ENCODE measurements at regions of chr16 and their contacts with region 1.

Region 1: DNA sequence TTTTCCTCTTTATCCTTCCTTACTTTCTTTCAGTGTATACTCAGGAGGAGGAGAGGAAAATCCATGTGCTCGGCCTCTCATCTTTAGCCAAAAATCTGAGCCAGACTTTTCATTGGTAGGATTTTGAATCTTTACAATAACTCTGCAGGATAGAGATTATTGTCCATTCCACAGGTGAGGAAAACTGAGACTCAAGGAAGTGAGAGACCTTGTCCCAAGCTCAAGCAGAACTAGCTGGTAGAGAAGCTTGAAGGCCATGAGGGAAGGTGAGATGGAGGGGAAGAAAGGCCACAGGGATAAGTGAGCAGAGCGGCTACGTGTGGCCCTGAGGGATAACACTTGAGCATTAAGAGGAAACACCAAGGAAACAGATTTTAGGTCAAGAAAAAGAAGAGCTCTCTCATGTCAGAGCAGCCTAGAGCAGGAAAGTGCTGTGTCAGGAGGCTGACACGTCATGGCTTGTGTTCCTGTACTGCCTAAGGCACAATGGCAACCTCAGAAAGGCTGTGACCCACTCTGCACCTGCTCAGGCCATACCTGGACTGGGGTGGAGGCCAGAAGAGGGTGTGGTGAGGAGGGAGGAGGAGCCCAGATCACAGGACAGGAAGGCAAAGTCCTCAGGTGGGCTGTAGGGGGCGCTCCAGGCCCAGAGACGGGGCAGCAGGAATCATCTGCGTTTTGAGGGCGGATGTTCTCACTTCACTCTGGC is 11.9 kb downstream of the MT4 start:
- DNase-seq: peak; percentile 95
- ATAC-seq: peak; percentile 100
- H3K4me3 Mint-ChIP-seq: no peak overlapping the region
- H3K27ac Mint-ChIP-seq: peak overlapping the region; percentile 70
- H3K4me1 Mint-ChIP-seq: peaks cover 4% of the 10 kb centered on the region
- H3K27me3 Mint-ChIP-seq: no peaks in the 10 kb centered on the region

Region 2: GRCh38 chr16:55989565-55989900 is 587.2 kb before region 1 on chr16:
- CTCF ChIA-PET with region 1: no interaction called
- POLR2A ChIA-PET with region 1: no interaction called
- intact Hi-C with region 1: no loop called
- DNase-seq: no peak
- ATAC-seq: no peak
- H3K4me3 Mint-ChIP-seq: no peak overlapping the region
- H3K27ac Mint-ChIP-seq: no peak overlapping the region
- H3K4me1 Mint-ChIP-seq: no peaks in the 10 kb centered on the region
- H3K27me3 Mint-ChIP-seq: peaks cover 16% of the 10 kb centered on the region

Region 3: DNA sequence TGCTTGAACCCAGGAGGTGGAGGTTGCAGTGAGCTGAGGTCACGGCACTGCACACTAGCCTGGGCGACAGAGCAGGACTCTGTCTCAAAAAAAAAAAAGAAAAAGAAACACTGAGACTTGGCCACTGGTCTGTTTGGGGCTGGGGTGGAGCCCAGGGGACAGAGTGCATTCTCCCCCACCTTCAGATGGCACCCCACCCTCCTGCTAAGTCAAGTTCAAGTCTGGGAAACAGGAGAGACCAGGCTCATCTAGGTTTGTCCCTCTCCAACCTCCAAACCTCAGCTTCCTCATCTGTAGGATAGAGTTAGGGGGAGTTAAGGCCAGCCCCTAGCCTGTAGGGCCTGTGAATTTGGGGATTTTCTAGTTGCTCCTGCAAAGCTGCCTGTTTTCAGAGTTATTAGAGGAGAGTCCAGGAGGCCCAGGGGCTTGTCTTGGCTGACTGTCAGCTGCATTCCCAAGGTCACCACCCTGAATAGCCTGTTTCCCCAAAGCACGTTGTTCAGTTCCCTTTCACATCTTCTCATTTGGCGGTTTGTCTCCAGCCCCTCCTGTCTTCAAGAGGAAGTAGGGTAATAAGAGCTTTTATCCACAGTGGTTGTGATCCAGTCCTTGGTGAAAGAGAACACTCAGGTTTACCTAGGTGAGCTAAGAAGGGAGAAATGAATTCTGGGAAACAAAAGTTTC is 14.8 kb after region 1 on chr16:
- CTCF ChIA-PET with region 1: interaction called, 13 read pairs
- POLR2A ChIA-PET with region 1: no interaction called
- intact Hi-C with region 1: no loop called
- DNase-seq: no peak
- ATAC-seq: no peak
- H3K4me3 Mint-ChIP-seq: no peak overlapping the region
- H3K27ac Mint-ChIP-seq: no peak overlapping the region
- H3K4me1 Mint-ChIP-seq: peaks cover 10% of the 10 kb centered on the region
- H3K27me3 Mint-ChIP-seq: peaks cover 20% of the 10 kb centered on the region

Region 4: DNA sequence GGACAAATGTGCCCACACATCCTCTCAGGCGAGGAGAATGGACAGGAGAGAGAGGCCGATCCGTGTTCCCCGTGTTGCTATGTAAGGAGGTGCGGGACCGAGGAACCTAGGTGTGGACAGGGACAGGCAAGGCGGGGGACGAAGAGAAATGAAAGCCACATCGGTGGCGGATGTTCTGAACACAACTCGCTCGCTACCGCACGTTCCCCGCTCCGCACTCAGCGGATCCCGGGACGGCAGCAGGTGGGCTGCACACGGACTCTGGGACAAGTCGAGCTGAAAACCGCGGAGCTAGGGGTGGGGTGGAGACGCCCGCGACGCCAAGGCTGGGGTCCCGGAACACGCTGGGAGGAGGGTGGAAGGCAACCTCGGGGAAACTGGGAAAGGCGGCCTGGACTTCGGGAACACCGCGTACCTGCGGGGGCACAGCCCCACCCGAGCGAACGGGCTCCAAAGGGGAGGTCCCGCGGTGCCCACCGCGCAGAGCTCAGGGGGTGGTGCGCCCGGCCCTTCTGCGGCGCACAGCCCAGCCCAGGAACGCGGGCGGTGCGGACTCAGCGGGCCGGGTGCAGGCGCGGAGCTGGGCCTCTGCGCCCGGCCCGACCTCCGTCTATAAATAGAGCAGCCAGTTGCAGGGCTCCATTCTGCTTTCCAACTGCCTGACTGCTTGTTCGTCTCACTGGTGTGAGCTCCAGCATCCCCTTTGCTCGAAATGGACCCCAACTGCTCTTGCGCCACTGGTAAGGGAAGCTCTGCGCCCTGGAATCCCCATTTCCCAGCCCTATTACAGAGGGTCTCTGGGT is 48.6 kb after region 1 on chr16 and contains the start of gene MT1E:
- CTCF ChIA-PET with region 1: interaction called, 3 read pairs
- POLR2A ChIA-PET with region 1: no interaction called
- intact Hi-C with region 1: loop called in 1 of 2 experiments (anchors 1 kb)
- DNase-seq: peak; percentile 82
- ATAC-seq: peak; percentile 88
- H3K4me3 Mint-ChIP-seq: peak within 1 kb of the TSS; percentile 71
- H3K27ac Mint-ChIP-seq: peak within 1 kb of the TSS; percentile 79
- H3K4me1 Mint-ChIP-seq: peaks cover 14% of the 10 kb centered on the region
- H3K27me3 Mint-ChIP-seq: peaks cover 26% of the 10 kb centered on the region
- total RNA-seq, gene MT1E: 61.1 to 108 TPM

Region 5: DNA sequence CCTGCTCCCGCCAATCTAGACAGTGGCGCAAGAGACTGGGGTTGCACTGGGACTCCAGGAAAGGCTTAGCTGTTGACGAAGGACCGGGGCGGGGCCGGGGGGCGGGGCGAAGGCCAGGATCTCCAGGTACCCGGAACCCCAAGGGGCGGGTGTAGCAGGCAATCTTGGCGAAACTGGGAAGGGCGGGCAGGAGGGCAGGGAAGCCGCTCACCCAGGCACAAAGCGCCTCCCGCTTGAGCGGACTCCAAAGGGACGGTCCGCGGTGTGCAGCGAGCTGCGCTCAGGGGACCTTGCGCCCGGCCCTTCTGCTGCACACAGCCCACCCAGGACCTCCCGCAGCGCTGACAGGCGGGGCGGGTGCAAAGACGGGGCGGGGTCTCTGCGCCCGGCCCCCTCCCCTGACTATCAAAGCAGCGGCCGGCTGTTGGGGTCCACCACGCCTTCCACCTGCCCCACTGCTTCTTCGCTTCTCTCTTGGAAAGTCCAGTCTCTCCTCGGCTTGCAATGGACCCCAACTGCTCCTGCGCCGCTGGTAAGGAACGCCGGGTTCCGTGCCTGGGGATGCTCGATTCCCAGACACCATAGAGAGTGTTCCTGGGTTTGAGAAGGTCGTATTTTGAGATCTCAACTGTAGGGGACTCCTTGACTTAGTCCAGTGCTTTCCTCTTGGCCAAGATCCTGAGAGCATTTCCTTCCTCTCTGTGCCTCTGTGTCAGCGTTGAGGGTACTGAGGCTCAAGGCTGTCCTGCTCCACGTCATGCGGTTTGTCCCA is 81.0 kb after region 1 on chr16 and contains the start of gene MT1F:
- CTCF ChIA-PET with region 1: interaction called, 3 read pairs
- POLR2A ChIA-PET with region 1: no interaction called
- intact Hi-C with region 1: loop called in 1 of 2 experiments (anchors 1 kb)
- DNase-seq: peak; percentile 84
- ATAC-seq: peak; percentile 85
- H3K4me3 Mint-ChIP-seq: peak within 1 kb of the TSS; percentile 79
- H3K27ac Mint-ChIP-seq: peak within 1 kb of the TSS; percentile 76
- H3K4me1 Mint-ChIP-seq: peaks cover 16% of the 10 kb centered on the region
- H3K27me3 Mint-ChIP-seq: peaks cover 2% of the 10 kb centered on the region
- total RNA-seq, gene MT1F: 7.0 to 7.1 TPM

Region 6: GRCh38 chr16:56700195-56700594 is 123.5 kb after region 1 on chr16:
- CTCF ChIA-PET with region 1: interaction called, 74 read pairs
- POLR2A ChIA-PET with region 1: interaction called, 4 read pairs
- intact Hi-C with region 1: loop called (anchors 1 kb)
- DNase-seq: no peak
- ATAC-seq: no peak
- H3K4me3 Mint-ChIP-seq: no peak overlapping the region
- H3K27ac Mint-ChIP-seq: no peak overlapping the region
- H3K4me1 Mint-ChIP-seq: peaks cover 8% of the 10 kb centered on the region
- H3K27me3 Mint-ChIP-seq: no peaks in the 10 kb centered on the region

Region 7: DNA sequence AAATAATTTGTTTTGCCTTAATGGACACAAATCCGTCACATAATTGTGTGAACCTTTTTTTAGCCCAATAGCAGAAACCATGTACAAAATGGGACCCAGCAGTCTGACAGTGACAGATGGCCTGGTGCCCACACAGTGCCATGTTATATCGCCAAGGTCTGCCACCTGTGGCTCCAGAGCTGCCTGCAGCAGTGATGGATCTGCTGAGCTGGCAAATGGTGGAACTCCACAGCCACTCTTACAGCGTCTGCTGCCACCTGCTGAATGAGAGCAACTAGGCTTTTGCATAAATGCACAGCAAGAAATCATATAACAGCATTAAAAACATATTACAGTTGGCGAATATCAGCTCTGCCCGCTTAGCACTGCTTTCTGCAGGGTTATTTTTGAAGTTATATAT is 212.6 kb after region 1 on chr16:
- CTCF ChIA-PET with region 1: interaction called, 3 read pairs
- POLR2A ChIA-PET with region 1: no interaction called
- intact Hi-C with region 1: loop called in 1 of 2 experiments (anchors 2 kb)
- DNase-seq: peak; percentile 54
- ATAC-seq: peak; percentile 65
- H3K4me3 Mint-ChIP-seq: no peak overlapping the region
- H3K27ac Mint-ChIP-seq: no peak overlapping the region
- H3K4me1 Mint-ChIP-seq: no peaks in the 10 kb centered on the region
- H3K27me3 Mint-ChIP-seq: no peaks in the 10 kb centered on the region

Region 8: GRCh38 chr16:56866943-56867830 is 290.4 kb after region 1 on chr16:
- CTCF ChIA-PET with region 1: interaction called, 4 read pairs
- POLR2A ChIA-PET with region 1: no interaction called
- intact Hi-C with region 1: loop called in 1 of 2 experiments (anchors 1 kb)
- DNase-seq: peak; percentile 62
- ATAC-seq: peak; percentile 48
- H3K4me3 Mint-ChIP-seq: no peak overlapping the region
- H3K27ac Mint-ChIP-seq: no peak overlapping the region
- H3K4me1 Mint-ChIP-seq: peaks cover 3% of the 10 kb centered on the region
- H3K27me3 Mint-ChIP-seq: no peaks in the 10 kb centered on the region

Measured in activated CD4-positive, alpha-beta T cell treated with anti-CD3 and anti-CD28 coated beads for 36 hours (primary cell).